Naive thymus-derived CD4-positive, alpha-beta T cell (primary cell): ENCODE measurements at regions of chr18 and their contacts with region 1.

Region 1: DNA sequence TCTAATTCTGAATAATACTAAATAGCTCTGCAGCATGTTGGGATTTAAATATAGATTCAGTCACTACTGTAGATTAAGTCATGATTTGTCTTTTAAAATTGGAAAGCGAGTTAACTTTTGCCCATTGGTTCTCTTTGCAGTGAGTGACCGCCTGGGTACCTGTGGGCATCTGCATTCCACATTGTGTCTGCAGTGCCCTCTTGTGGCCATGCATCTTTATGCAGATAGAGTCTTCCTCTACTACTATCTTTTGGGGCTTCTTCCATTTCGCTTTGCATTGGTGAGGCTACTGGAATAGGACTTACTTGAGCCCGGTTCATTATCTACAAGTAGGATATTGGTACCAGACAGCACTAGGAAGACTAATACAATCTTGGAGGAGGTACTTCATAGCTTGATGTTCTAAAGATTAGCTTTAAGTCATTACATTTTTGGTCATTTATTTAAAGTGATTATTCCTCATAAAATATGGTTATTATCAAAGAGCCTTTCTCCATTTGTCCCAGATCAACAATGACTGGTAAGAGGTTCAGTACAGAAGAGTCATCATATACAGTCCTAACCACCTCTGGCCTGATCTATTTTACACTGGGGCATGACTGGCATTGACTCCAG is 203.0 kb downstream of the SOCS6 start:
- DNase-seq: peak in 7 of 9 donors; percentile 9 to 43 (median 25)
- ATAC-seq: peak; percentile 68
- H3K4me3 ChIP-seq: no peak overlapping the region
- H3K4me3 Mint-ChIP-seq: no peak overlapping the region
- H3K27ac ChIP-seq: no peak overlapping the region
- H3K27ac Mint-ChIP-seq: peak overlapping the region in 4 of 9 donors; percentile 31 to 59 (median 44)
- H3K4me1 ChIP-seq: no peaks in the 10 kb centered on the region
- H3K4me1 Mint-ChIP-seq: peaks cover 0 to 14% (median 8%) of the 10 kb centered on the region in 7 donors
- H3K27me3 ChIP-seq: no peaks in the 10 kb centered on the region
- H3K27me3 Mint-ChIP-seq: peaks cover 0 to 10% (median 7%) of the 10 kb centered on the region in 5 donors

Region 2: DNA sequence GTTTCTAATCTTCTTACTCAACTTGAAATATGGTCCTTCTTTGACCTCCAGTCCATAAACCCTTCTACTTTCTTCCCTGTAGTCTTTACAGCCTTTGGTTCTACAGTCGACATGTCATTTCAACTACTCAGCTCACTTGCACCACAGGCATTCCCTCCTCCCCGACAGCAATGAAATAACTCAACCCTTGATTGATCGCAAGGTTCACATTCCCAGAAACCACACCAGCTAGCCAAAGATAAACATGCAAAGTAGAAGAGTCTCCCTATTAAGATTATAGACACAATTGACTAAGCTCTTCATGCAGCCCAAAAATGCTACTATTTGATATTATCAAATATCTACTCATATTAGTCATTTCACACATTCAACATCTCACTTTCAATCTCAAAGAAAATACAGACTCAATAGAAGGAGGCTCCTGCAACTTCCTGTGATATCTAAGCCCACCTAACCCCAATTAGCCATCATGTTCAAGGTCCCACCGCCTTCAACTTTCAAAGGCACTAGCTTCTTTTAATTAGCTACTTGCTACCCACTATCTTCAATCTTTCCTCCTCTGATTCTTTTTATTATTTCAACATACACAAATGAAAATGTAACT is 337.1 kb before region 1 on chr18:
- CTCF ChIA-PET with region 1: no interaction called
- POLR2A ChIA-PET with region 1: no interaction called
- intact Hi-C with region 1: no loop called
- DNase-seq: no peak
- ATAC-seq: no peak
- H3K4me3 ChIP-seq: no peak overlapping the region
- H3K4me3 Mint-ChIP-seq: no peak overlapping the region
- H3K27ac ChIP-seq: no peak overlapping the region
- H3K27ac Mint-ChIP-seq: no peak overlapping the region
- H3K4me1 ChIP-seq: no peaks in the 10 kb centered on the region
- H3K4me1 Mint-ChIP-seq: peaks cover 11 to 35% (median 14%) of the 10 kb centered on the region in 7 donors
- H3K27me3 ChIP-seq: no peaks in the 10 kb centered on the region
- H3K27me3 Mint-ChIP-seq: no peaks in the 10 kb centered on the region

Region 3: GRCh38 chr18:70513502-70514171 is 21.8 kb after region 1 on chr18:
- CTCF ChIA-PET with region 1: no interaction called
- POLR2A ChIA-PET with region 1: no interaction called
- intact Hi-C with region 1: no loop called
- DNase-seq: no peak
- ATAC-seq: no peak
- H3K4me3 ChIP-seq: no peak overlapping the region
- H3K4me3 Mint-ChIP-seq: no peak overlapping the region
- H3K27ac ChIP-seq: no peak overlapping the region
- H3K27ac Mint-ChIP-seq: no peak overlapping the region
- H3K4me1 ChIP-seq: no peaks in the 10 kb centered on the region
- H3K4me1 Mint-ChIP-seq: no peaks in the 10 kb centered on the region
- H3K27me3 ChIP-seq: no peaks in the 10 kb centered on the region
- H3K27me3 Mint-ChIP-seq: no peaks in the 10 kb centered on the region

Region 4: DNA sequence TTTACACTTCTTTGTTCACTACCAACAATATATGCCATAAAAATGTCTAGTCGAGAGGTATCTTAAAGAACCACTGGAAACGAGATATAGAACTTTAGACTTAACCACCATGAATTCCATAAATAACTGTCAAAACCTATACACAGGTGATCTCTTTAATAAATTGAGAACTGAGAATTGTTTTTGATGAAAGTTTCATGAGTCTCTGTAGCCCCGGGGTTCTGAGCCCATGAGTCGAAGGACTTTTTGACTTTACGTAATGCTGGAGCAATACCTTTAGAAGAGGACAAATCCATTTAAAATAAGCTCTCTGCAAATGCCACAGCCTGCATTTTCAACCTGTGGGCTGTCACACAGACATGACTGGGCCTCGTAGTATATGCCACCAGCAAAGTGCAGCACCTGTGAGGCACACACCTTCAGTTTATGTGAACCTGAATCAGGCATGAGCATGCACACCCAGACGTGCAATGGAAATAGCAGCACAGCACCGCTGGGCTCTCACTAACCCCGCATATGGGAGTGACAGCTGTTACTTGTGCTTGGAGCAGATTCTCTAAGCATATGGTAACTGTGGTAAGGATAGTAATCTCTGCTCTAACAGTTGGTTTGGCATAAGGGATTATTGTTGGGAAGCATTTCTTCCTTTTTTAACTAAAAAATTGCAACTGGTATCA is 180.2 kb after region 1 on chr18:
- CTCF ChIA-PET with region 1: interaction called, 5 read pairs
- POLR2A ChIA-PET with region 1: no interaction called
- intact Hi-C with region 1: loop called in 1 of 2 experiments (anchors 5 kb)
- DNase-seq: peak in 2 of 9 donors; percentile 49 to 58
- ATAC-seq: peak; percentile 50
- H3K4me3 ChIP-seq: no peak overlapping the region
- H3K4me3 Mint-ChIP-seq: peak overlapping the region in 8 of 10 donors; percentile 1 to 66 (median 37)
- H3K27ac ChIP-seq: peak overlapping the region; percentile 74
- H3K27ac Mint-ChIP-seq: peak overlapping the region in 8 of 9 donors; percentile 89 to 98 (median 94)
- H3K4me1 ChIP-seq: peaks cover 3 to 52% of the 10 kb centered on the region in 2 donors
- H3K4me1 Mint-ChIP-seq: peaks cover 11 to 68% (median 59%) of the 10 kb centered on the region in 7 donors
- H3K27me3 ChIP-seq: no peaks in the 10 kb centered on the region
- H3K27me3 Mint-ChIP-seq: no peaks in the 10 kb centered on the region

Region 5: DNA sequence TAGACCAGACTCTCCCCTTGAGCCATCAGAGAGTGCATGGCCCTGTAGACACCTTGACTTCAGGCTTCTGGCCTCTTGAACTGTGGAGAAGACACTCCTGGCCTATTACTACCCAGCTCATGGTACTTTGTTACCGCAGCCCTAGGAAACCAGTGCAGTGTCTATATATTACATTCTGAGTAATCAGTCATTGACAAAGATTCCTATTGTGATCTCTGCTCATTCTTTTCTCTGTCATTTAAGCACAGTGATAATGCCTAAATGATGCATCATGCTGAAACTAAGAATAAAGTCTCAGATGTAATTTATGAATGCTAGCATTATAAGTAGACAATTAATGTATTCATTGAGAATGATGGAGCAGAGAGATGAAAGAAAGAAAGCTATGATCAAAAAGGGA is 400.5 kb after region 1 on chr18:
- CTCF ChIA-PET with region 1: no interaction called
- POLR2A ChIA-PET with region 1: no interaction called
- intact Hi-C with region 1: loop called in 1 of 2 experiments (anchors 1 kb)
- DNase-seq: no peak
- ATAC-seq: no peak
- H3K4me3 ChIP-seq: no peak overlapping the region
- H3K4me3 Mint-ChIP-seq: no peak overlapping the region
- H3K27ac ChIP-seq: no peak overlapping the region
- H3K27ac Mint-ChIP-seq: no peak overlapping the region
- H3K4me1 ChIP-seq: no peaks in the 10 kb centered on the region
- H3K4me1 Mint-ChIP-seq: no peaks in the 10 kb centered on the region
- H3K27me3 ChIP-seq: no peaks in the 10 kb centered on the region
- H3K27me3 Mint-ChIP-seq: no peaks in the 10 kb centered on the region

Region 6: DNA sequence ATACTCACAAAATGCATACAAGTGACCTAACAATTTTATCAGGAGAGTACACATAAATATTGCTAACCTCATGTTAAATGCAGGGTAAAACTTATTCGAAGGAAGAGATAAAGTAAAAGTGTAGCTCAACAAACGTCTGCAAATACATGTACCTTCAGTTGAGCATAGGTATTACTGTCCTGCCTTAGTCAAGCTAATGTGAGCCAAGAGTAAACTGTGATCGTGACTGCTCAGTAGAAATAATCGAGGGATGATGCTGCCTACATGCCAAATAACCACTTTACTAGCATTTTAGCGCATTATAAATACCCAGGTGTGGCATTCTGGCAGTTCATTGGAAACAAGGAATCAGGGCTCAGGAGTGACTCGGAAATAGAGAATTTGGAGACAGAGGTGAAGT is 576.5 kb after region 1 on chr18:
- CTCF ChIA-PET with region 1: no interaction called
- POLR2A ChIA-PET with region 1: no interaction called
- intact Hi-C with region 1: loop called in 1 of 2 experiments (anchors 5 kb)
- DNase-seq: no peak
- ATAC-seq: no peak
- H3K4me3 ChIP-seq: no peak overlapping the region
- H3K4me3 Mint-ChIP-seq: no peak overlapping the region
- H3K27ac ChIP-seq: no peak overlapping the region
- H3K27ac Mint-ChIP-seq: no peak overlapping the region
- H3K4me1 ChIP-seq: no peaks in the 10 kb centered on the region
- H3K4me1 Mint-ChIP-seq: no peaks in the 10 kb centered on the region
- H3K27me3 ChIP-seq: no peaks in the 10 kb centered on the region
- H3K27me3 Mint-ChIP-seq: no peaks in the 10 kb centered on the region

Region 7: DNA sequence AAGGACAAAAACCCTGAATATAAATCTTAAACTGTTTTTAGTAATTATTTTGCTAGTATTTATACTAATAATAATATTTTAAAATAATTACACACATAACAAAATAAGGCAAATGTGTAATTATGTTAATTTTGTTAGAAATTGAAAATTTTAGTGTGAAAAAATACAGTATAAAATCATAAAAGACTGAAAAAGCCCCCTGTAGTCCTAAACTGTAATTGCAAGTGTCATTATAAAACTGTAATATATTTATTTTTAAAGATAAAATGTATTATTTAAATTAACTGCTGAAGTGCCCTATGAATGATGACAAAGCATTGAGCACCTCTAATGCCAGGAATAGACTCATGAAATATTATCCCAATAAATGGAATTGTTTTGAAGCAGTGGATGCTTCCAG is 934.6 kb after region 1 on chr18:
- CTCF ChIA-PET with region 1: no interaction called
- POLR2A ChIA-PET with region 1: no interaction called
- intact Hi-C with region 1: loop called in 1 of 2 experiments (anchors 2 kb)
- DNase-seq: no peak
- ATAC-seq: no peak
- H3K4me3 ChIP-seq: no peak overlapping the region
- H3K4me3 Mint-ChIP-seq: no peak overlapping the region
- H3K27ac ChIP-seq: no peak overlapping the region
- H3K27ac Mint-ChIP-seq: no peak overlapping the region
- H3K4me1 ChIP-seq: no peaks in the 10 kb centered on the region
- H3K4me1 Mint-ChIP-seq: peaks cover 0 to 2% (median 0%) of the 10 kb centered on the region in 7 donors
- H3K27me3 ChIP-seq: no peaks in the 10 kb centered on the region
- H3K27me3 Mint-ChIP-seq: no peaks in the 10 kb centered on the region

Region 8: GRCh38 chr18:72086421-72086820 is 1594.6 kb after region 1 on chr18:
- CTCF ChIA-PET with region 1: no interaction called
- POLR2A ChIA-PET with region 1: no interaction called
- intact Hi-C with region 1: loop called in 1 of 2 experiments (anchors 5 kb)
- DNase-seq: peak in 4 of 9 donors; percentile 5 to 22 (median 7)
- ATAC-seq: no peak
- H3K4me3 ChIP-seq: no peak overlapping the region
- H3K4me3 Mint-ChIP-seq: no peak overlapping the region
- H3K27ac ChIP-seq: no peak overlapping the region
- H3K27ac Mint-ChIP-seq: no peak overlapping the region
- H3K4me1 ChIP-seq: no peaks in the 10 kb centered on the region
- H3K4me1 Mint-ChIP-seq: peaks cover 0 to 4% (median 0%) of the 10 kb centered on the region in 7 donors
- H3K27me3 ChIP-seq: no peaks in the 10 kb centered on the region
- H3K27me3 Mint-ChIP-seq: peaks cover 0 to 5% (median 0%) of the 10 kb centered on the region in 5 donors